ENCODE measurements at regions of chr3 and their contacts with region 1.

Region 1: GRCh38 chr3:77449459-77450350 is 409.8 kb downstream of the ROBO2 start:
- DNase-seq: no peak
- H3K4me3 ChIP-seq: no peak overlapping the region
- H3K27ac ChIP-seq: no peak overlapping the region
- H3K4me1 ChIP-seq: no peaks in the 10 kb centered on the region
- H3K27me3 ChIP-seq: no peaks in the 10 kb centered on the region
- CTCF ChIP-seq: no peak
- POLR2A ChIP-seq: no peak

Region 2: GRCh38 chr3:76958274-76958673 is 491.4 kb before region 1 on chr3:
- CTCF ChIA-PET with region 1: no interaction called
- POLR2A ChIA-PET with region 1: no interaction called
- dilution Hi-C with region 1: no loop called
- intact Hi-C with region 1: no loop called
- DNase-seq: no peak
- H3K4me3 ChIP-seq: no peak overlapping the region
- H3K27ac ChIP-seq: no peak overlapping the region
- H3K4me1 ChIP-seq: no peaks in the 10 kb centered on the region
- H3K27me3 ChIP-seq: no peaks in the 10 kb centered on the region
- CTCF ChIP-seq: no peak
- POLR2A ChIP-seq: no peak

Region 3: GRCh38 chr3:77412021-77412438 is 37.7 kb before region 1 on chr3:
- CTCF ChIA-PET with region 1: no interaction called
- POLR2A ChIA-PET with region 1: no interaction called
- dilution Hi-C with region 1: no loop called
- intact Hi-C with region 1: no loop called
- DNase-seq: no peak
- H3K4me3 ChIP-seq: no peak overlapping the region
- H3K27ac ChIP-seq: no peak overlapping the region
- H3K4me1 ChIP-seq: no peaks in the 10 kb centered on the region
- H3K27me3 ChIP-seq: no peaks in the 10 kb centered on the region
- CTCF ChIP-seq: no peak
- POLR2A ChIP-seq: no peak

Region 4: DNA sequence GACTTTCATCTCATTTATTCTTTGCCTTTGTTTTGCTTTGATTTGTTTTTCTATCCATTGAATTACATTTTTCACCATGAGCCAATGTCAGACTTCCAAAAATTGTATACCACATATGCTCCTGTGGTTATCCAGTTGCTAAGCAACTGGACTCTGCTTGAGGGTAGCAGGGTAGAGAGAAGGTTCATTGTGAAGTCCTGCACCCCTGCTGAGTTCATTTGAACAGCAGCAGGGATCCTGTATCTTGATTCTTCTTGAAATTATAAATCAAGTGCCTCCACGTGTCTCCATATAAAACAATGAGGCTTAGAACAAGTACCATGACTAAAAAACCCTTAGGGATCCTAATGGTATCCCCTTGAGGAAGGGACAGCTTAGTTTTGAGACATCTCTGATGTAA is 39.5 kb after region 1 on chr3:
- CTCF ChIA-PET with region 1: no interaction called
- POLR2A ChIA-PET with region 1: interaction called, 11 read pairs
- dilution Hi-C with region 1: no loop called
- intact Hi-C with region 1: no loop called
- DNase-seq: no peak
- H3K4me3 ChIP-seq: no peak overlapping the region
- H3K27ac ChIP-seq: no peak overlapping the region
- H3K4me1 ChIP-seq: no peaks in the 10 kb centered on the region
- H3K27me3 ChIP-seq: no peaks in the 10 kb centered on the region
- CTCF ChIP-seq: no peak
- POLR2A ChIP-seq: no peak

Region 5: DNA sequence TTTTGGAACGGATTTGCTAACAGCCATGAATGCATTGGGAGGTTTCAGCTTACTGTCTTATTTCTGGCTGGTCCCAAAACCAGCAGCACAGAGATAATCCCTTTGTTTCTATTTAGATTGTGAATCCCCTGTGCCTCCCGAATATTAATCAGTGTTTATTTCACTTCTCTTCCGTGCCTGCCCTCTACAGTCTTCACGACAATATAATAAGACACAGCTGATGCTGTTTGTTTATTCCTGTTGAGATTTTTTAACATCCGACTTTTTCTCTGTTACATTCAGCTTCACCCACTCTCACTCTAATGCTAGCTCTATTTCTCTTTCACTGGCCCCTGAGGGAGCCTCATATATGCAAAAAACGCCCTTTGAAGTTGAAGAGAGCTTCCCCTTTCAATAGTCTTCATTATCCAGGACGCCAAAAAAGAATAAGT is 585.4 kb after region 1 on chr3:
- CTCF ChIA-PET with region 1: no interaction called
- POLR2A ChIA-PET with region 1: no interaction called
- dilution Hi-C with region 1: no loop called
- intact Hi-C with region 1: no loop called
- DNase-seq: no peak
- H3K4me3 ChIP-seq: no peak overlapping the region
- H3K27ac ChIP-seq: no peak overlapping the region
- H3K4me1 ChIP-seq: no peaks in the 10 kb centered on the region
- H3K27me3 ChIP-seq: no peaks in the 10 kb centered on the region
- CTCF ChIP-seq: no peak
- POLR2A ChIP-seq: no peak